Activated CD4-positive, alpha-beta T cell treated with anti-CD3 and anti-CD28 coated beads for 36 hours (primary cell): ENCODE measurements at regions of chr9 and their contacts with region 1.

Region 1: DNA sequence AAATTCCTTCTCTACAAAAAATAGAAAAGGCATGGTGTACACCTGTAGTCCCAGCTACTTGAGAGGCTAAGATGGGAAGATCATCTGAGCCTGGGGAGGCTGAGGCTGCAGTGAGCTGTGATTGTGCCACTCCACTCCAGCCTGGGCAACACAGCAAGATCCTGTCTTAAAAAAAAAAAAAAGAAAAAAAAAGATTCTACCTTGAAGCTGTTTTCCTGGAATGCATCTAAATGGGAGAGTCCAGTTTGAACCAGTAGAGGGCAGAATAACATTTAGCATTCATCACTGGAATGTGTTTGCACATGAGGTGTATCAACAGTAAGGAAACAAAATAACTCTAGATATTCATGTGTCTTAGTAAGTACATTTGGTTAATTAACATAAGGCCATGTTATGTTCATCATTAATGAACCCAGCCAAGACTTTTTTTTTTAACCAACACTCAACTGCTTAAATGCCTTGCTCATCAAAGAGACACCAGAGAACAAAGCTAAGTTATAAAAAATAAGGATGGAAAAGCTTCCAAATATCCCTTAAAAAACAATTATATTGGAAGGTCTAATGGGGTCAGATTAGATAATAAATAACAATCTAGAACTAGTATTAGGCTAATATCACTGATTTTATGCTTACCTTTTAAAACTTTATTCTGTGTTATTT is 16.1 kb downstream of the IFNE start:
- DNase-seq: no peak
- ATAC-seq: peak; percentile 78
- H3K4me3 Mint-ChIP-seq: no peak overlapping the region
- H3K27ac Mint-ChIP-seq: no peak overlapping the region
- H3K4me1 Mint-ChIP-seq: no peaks in the 10 kb centered on the region
- H3K27me3 Mint-ChIP-seq: peaks cover 2% of the 10 kb centered on the region

Region 2: GRCh38 chr9:21357479-21358460 is 108.2 kb before region 1 on chr9:
- CTCF ChIA-PET with region 1: no interaction called
- POLR2A ChIA-PET with region 1: no interaction called
- intact Hi-C with region 1: no loop called
- DNase-seq: peak; percentile 40
- ATAC-seq: peak; percentile 94
- H3K4me3 Mint-ChIP-seq: peak overlapping the region; percentile 35
- H3K27ac Mint-ChIP-seq: peak overlapping the region; percentile 70
- H3K4me1 Mint-ChIP-seq: peaks cover 19% of the 10 kb centered on the region
- H3K27me3 Mint-ChIP-seq: peaks cover 18% of the 10 kb centered on the region

Region 3: GRCh38 chr9:21481470-21482056 is 15.6 kb after region 1 on chr9:
- CTCF ChIA-PET with region 1: interaction called, 7 read pairs
- POLR2A ChIA-PET with region 1: no interaction called
- intact Hi-C with region 1: loop called in 1 of 2 experiments (anchors 1 kb)
- DNase-seq: no peak
- ATAC-seq: no peak
- H3K4me3 Mint-ChIP-seq: no peak overlapping the region
- H3K27ac Mint-ChIP-seq: no peak overlapping the region
- H3K4me1 Mint-ChIP-seq: no peaks in the 10 kb centered on the region
- H3K27me3 Mint-ChIP-seq: peaks cover 5% of the 10 kb centered on the region

Region 4: DNA sequence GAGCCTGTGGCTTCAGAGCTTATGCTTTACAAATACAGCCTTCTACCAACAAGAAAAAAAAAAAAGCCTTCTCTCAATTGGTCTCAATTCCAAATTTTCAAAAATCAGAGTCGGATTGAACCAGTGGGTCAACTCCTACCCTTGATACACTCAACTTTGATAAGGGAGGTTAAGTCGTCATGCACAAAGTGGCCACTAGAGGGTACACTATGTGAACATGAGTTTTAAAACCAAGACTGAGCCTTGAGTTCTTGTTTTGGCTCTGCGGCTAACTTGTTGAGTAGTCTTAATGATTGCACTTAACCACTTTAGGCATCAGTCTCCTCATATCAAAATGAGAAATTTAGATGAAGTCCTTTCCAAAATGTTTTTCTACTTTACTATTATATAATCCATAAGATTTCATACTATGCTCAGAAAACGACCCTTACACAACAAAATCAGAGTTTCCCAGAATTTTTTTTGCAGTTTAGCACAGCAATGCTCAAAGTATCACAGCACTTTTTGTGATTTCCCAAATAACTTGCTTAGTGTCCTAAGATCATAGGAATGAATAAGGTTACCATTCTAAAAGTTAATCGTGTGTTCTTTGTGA is 243.6 kb after region 1 on chr9:
- CTCF ChIA-PET with region 1: interaction called, 10 read pairs
- POLR2A ChIA-PET with region 1: no interaction called
- intact Hi-C with region 1: loop called (anchors 1 to 5 kb)
- DNase-seq: peak; percentile 79
- ATAC-seq: peak; percentile 53
- H3K4me3 Mint-ChIP-seq: no peak overlapping the region
- H3K27ac Mint-ChIP-seq: no peak overlapping the region
- H3K4me1 Mint-ChIP-seq: peaks cover 19% of the 10 kb centered on the region
- H3K27me3 Mint-ChIP-seq: peaks cover 2% of the 10 kb centered on the region